Dendritic cell treated with granulocyte-macrophage colony-stimulating factor and Interleukin-4, amounts not matched to agents 40 ng/mL and 50 ng/mL, for 4 days (primary cell): ENCODE measurements at regions of chr2 and their contacts with region 1.

Region 1: DNA sequence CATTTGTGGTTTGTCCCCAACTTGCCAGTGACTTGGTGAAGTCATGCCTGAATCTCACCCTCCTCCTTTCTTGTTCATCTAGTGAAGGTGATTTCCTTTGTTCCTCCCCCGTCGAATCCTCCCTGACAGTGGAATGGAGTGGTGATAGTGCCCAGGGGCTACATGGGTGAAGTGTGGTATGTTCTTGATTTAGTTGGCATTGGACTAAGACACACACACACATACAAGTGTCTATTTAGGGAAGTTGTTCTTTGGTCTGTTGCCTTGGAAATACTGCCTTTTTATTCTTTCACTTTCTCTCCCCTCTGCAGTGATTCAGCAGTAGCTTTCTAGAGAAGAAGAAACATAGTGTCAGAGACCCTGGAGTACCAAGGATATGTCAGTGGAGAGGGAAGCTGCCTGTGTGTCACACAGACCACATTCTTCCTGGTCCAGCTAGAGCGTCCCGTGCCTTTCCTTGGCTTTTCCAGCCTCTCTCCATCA is 10.9 kb downstream of the INPP4A start:
- H3K4me3 Mint-ChIP-seq: peak overlapping the region; percentile 61
- H3K27ac Mint-ChIP-seq: peak overlapping the region; percentile 92
- H3K4me1 Mint-ChIP-seq: peaks cover 89% of the 10 kb centered on the region
- H3K27me3 Mint-ChIP-seq: no peaks in the 10 kb centered on the region

Region 2: DNA sequence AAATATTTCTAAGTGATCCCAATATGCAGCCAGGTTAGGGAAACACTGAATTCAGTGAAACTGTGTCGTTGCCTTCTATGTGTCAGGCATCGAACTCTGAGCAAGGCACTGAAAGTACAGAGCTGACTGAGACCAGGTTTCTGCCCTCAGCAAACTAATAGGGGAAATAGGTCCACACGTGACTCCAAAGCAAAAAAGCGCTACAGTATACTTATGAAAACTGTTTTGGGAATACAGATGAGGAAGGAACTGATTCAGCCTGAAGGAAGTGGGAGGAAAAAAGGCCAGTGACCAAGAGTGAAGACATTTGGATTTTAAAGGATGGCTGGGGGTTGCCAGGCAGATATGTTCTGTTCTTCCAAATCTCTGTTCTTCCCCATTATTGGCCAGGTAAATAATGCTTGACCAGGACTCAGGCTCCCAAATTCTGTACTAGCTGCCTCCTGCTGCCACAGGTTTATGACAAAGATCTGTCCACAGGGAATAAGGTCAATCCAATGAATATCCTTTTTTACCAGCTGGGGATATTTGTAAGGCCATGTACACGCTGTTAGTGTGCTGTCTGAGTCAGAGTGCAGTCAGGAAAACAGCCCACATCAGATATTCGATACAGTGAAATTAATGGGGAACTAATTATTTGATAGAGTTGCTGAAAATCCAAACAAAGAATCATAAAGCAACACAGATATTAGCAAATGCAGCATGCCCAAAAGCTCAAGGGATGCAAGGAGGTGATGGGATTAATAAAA is 35.4 kb before region 1 on chr2:
- intact Hi-C with region 1: loop called (anchors 5 kb)
- H3K4me3 Mint-ChIP-seq: no peak overlapping the region
- H3K27ac Mint-ChIP-seq: peak overlapping the region; percentile 21
- H3K4me1 Mint-ChIP-seq: peaks cover 16% of the 10 kb centered on the region
- H3K27me3 Mint-ChIP-seq: no peaks in the 10 kb centered on the region

Region 3: DNA sequence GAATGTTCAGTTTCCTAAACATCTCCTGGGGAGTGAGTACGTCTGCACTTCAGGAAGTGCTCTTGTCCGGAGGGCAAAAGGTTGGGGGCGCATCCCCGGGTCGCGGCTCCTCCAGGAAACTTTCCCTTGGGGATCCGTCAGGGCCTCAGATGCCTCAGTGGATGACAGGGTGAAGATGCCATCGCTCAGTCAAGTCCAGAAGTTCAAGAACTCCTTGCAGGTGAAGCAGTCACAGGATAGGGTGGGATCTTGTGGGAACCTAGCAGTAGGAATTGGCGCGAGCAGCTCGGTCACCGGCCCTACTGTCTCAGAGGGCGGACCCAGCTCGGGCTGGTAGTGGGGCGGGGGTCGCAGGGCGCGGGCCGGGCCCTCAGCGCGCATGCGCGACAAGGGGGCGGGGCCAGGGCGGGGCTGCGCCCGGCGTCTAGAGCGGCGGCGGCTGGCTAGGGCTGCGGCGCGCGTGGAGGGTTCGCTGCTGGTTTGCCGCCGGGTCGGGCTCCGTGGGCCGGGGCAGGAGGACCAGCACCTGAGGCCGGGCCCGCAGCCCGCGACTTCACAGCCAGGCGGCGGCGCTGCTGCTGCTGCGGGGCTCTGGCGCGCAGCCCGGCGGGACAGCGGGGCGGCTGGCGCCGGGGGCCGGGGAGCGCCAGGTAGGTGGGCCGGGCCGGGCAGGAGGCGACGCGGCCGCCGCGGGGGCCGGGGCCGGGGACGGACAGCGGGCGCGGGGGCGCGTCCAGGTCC is 10.9 kb before region 1 on chr2 and contains the start of gene INPP4A:
- intact Hi-C with region 1: loop called (anchors 1 kb)
- H3K4me3 Mint-ChIP-seq: peak within 1 kb of the TSS; percentile 86
- H3K27ac Mint-ChIP-seq: peak within 1 kb of the TSS; percentile 84
- H3K4me1 Mint-ChIP-seq: peaks cover 38% of the 10 kb centered on the region
- H3K27me3 Mint-ChIP-seq: no peaks in the 10 kb centered on the region

Region 4: DNA sequence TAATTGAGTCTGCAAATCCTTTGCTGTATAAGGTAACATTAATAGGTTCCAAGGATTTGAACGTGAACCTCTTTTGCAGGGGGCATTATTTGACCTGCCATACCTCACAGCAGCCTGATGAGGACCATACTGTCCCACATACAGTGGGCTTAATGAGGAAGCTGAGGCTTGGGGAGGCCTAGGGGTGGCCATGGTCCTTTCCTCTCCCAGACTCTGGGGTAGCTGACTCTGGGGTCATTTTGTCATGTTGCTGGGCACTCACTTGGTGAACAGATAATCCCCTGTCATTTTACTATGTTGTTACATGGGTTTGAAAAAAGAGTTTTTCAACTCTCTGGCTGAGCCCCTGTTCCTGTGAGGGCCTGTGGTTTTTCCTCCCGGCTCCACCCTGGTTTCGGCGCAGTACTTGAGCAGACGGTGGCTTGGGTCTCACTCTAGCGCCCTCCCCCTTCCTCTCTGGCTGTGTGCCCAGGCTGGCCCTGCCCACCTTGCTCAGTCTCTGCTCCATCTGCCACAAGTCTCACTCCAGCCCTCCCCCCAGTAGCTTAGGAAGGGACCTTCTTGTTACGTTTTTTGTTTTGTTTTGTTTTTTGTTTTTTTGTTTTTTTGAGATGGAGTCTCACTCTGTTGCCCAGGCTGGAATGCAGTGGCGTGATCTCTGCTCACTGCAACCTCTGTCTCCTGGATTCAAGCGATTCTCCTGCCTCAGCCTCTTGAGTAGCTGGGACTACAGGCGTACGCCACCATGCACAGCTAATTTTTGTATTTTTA is 10.1 kb after region 1 on chr2:
- intact Hi-C with region 1: loop called (anchors 1 kb)
- H3K4me3 Mint-ChIP-seq: peak overlapping the region; percentile 59
- H3K27ac Mint-ChIP-seq: peak overlapping the region; percentile 94
- H3K4me1 Mint-ChIP-seq: peaks cover 85% of the 10 kb centered on the region
- H3K27me3 Mint-ChIP-seq: no peaks in the 10 kb centered on the region